Endothelial cell of umbilical vein (primary cell): ENCODE measurements at regions of chr17 and their contacts with region 1.

Region 1: DNA sequence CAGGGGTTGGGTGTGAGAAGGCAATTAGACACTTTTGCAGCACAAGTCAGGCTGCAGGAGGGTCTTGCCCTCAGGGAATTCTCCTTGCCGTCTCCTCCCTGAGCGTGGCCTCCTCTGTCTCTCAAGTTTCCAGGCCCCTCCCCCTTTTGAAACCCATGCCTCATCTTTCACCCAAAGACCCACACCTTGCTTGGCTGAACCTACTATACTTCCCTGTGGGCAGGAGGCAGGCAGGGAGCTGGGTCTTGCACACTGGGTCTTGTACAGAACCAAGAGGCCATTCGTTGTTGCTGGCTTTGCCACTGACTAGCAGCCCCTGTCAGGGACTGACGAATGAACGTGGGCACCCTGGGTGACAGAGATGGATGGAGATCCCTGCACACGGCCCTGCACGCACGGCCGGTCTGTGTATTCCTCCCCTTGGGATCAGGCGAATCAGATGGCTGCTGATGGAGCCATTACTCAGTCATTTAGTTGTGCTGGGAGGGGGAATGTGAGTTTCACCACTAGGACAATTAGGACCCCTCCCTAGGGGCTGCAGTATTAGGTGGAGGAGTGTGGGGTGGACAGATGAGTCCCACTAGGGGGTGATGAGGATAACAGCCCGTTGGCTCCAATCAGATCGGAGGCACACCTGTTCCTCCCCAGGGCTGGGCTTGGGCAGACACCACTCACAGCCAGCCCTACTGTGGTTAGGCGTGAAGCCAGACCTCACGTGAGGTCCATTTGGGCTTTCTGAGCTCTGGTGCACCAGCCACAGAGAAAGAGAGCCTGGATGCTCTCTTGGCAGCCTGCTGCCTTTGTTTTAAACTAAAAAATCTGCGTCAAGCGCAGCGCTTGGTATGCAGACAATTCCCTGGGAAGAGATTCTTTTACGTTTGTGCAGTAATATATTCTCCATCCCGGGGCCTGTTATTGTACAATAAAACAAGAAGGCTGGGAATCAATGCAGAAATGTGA is 167.7 kb upstream of the WSCD1 start:
- DNase-seq: no peak
- H3K4me3 ChIP-seq: no peak overlapping the region
- H3K27ac ChIP-seq: no peak overlapping the region
- H3K4me1 ChIP-seq: peaks cover 3% of the 10 kb centered on the region
- H3K27me3 ChIP-seq: no peaks in the 10 kb centered on the region
- CTCF ChIP-seq: no peak
- POLR2A ChIP-seq: no peak

Region 2: DNA sequence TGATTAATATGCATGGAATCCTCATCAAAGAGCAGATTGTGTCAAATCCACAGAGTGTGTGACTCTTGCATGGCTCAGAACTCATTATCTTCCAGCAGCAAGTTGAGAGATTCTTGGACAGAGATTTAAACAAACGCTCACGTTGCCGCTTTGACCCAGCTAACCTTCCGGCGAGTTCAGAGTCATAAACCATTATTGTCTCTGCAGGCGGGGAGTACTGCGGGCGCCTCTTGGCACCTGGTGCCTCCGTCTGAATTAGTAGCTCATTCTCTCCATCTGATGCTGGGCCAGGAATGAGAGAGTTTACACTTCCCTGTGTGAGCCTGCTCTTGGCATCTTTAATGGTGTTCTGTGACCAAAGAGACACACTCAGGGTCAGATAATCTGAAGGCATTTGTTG is 29.2 kb after region 1 on chr17:
- CTCF ChIA-PET with region 1: no interaction called
- POLR2A ChIA-PET with region 1: interaction called, 10 read pairs
- dilution Hi-C with region 1: no loop called
- intact Hi-C with region 1: no loop called
- DNase-seq: no peak
- H3K4me3 ChIP-seq: no peak overlapping the region
- H3K27ac ChIP-seq: no peak overlapping the region
- H3K4me1 ChIP-seq: no peaks in the 10 kb centered on the region
- H3K27me3 ChIP-seq: peaks cover 0 to 3% of the 10 kb centered on the region in 2 experiments
- CTCF ChIP-seq: no peak
- POLR2A ChIP-seq: no peak